GM12878 (cell line): ENCODE measurements at regions of chrX and their contacts with region 1.

Region 1: GRCh38 chrX:119729408-119730201 is 28.8 kb upstream of the SOWAHD start:
- DNase-seq: peak; percentile 31
- ATAC-seq: peak; percentile 77
- H3K4me3 ChIP-seq: no peak overlapping the region
- H3K27ac ChIP-seq: no peak overlapping the region
- H3K4me1 ChIP-seq: no peaks in the 10 kb centered on the region
- H3K27me3 ChIP-seq: no peaks in the 10 kb centered on the region
- CTCF ChIP-seq: peak; percentile 61 to 85 (median 76)
- EP300 ChIP-seq: no peak
- POLR2A ChIP-seq: no peak
- RAD21 ChIP-seq: peak; percentile 89

Region 2: DNA sequence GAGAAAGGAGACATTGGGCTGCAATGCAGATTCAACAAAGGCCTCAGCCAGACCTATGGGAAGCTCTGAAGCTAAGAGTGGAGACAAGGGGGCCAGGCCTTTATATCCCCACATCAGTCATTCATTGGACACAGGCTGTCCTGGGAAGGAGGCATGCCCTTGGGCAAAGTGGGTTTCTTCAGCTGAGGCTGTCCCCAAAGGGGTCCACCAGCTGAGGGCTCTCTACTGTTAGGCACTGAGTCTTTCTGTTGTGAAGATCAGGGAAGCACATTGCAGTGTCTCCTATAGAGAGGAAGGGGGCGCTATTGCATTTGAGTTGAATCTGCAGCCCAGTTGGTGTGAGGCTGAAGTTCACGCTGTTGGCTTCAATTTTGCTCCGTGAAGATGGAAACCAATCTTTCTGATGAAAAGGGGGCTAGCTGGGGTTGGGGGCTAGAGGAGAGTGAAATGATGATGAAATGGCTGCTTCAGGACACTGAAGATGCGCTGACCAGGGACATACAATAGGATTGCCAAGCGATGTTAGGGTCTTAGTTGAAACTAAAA is 213.4 kb before region 1 on chrX:
- CTCF ChIA-PET with region 1: interaction called, 89 read pairs
- POLR2A ChIA-PET with region 1: interaction called, 4 read pairs
- RAD21 ChIA-PET with region 1: interaction called, 23 read pairs
- SMC1A ChIA-PET with region 1: interaction called, 75 read pairs
- in situ Hi-C with region 1: loop called (anchors 5 kb)
- intact Hi-C with region 1: loop called (anchors 1 kb)
- DNase-seq: peak; percentile 39
- ATAC-seq: peak; percentile 95
- H3K4me3 ChIP-seq: no peak overlapping the region
- H3K27ac ChIP-seq: no peak overlapping the region
- H3K4me1 ChIP-seq: no peaks in the 10 kb centered on the region; the same call in 1 of the 2 replicates
- H3K27me3 ChIP-seq: no peaks in the 10 kb centered on the region
- CTCF ChIP-seq: peak; percentile 91 to 99 (median 93); a peak in 5 of 6 replicates
- EP300 ChIP-seq: no peak
- POLR2A ChIP-seq: no peak
- RAD21 ChIP-seq: peak; percentile 92

Region 3: GRCh38 chrX:119638725-119639471 is 90.7 kb before region 1 on chrX:
- CTCF ChIA-PET with region 1: interaction called, 28 read pairs
- POLR2A ChIA-PET with region 1: no interaction called
- RAD21 ChIA-PET with region 1: interaction called, 50 read pairs
- SMC1A ChIA-PET with region 1: interaction called, 34 read pairs
- in situ Hi-C with region 1: no loop called
- intact Hi-C with region 1: no loop called
- DNase-seq: peak; percentile 81
- ATAC-seq: peak; percentile 84
- H3K4me3 ChIP-seq: no peak overlapping the region
- H3K27ac ChIP-seq: peak overlapping the region; percentile 67
- H3K4me1 ChIP-seq: peaks cover 61% of the 10 kb centered on the region
- H3K27me3 ChIP-seq: no peaks in the 10 kb centered on the region
- CTCF ChIP-seq: 0 out of 6 replicates have a peak, but pooled peaks of 1 of the 3 experiments have one; percentile 10
- EP300 ChIP-seq: no peak
- POLR2A ChIP-seq: no peak
- RAD21 ChIP-seq: no peak

Region 4: GRCh38 chrX:119669424-119670037 is 60.1 kb before region 1 on chrX:
- CTCF ChIA-PET with region 1: interaction called, 13 read pairs
- POLR2A ChIA-PET with region 1: interaction called, 4 read pairs
- RAD21 ChIA-PET with region 1: interaction called, 13 read pairs
- SMC1A ChIA-PET with region 1: interaction called, 15 read pairs
- in situ Hi-C with region 1: no loop called
- intact Hi-C with region 1: no loop called
- DNase-seq: no peak
- ATAC-seq: no peak
- H3K4me3 ChIP-seq: no peak overlapping the region
- H3K27ac ChIP-seq: no peak overlapping the region
- H3K4me1 ChIP-seq: peaks cover 25% of the 10 kb centered on the region
- H3K27me3 ChIP-seq: no peaks in the 10 kb centered on the region
- CTCF ChIP-seq: no peak
- EP300 ChIP-seq: no peak
- POLR2A ChIP-seq: no peak
- RAD21 ChIP-seq: no peak

Region 5: GRCh38 chrX:119698845-119699244 is 30.8 kb before region 1 on chrX:
- CTCF ChIA-PET with region 1: interaction called, 33 read pairs
- POLR2A ChIA-PET with region 1: interaction called, 3 read pairs
- RAD21 ChIA-PET with region 1: interaction called, 50 read pairs
- SMC1A ChIA-PET with region 1: interaction called, 43 read pairs
- in situ Hi-C with region 1: no loop called
- intact Hi-C with region 1: loop called (anchors 2 kb)
- DNase-seq: no peak
- ATAC-seq: peak; percentile 69
- H3K4me3 ChIP-seq: no peak overlapping the region
- H3K27ac ChIP-seq: no peak overlapping the region
- H3K4me1 ChIP-seq: peaks cover 20% of the 10 kb centered on the region
- H3K27me3 ChIP-seq: no peaks in the 10 kb centered on the region
- CTCF ChIP-seq: peak; percentile 55 to 77 (median 72)
- EP300 ChIP-seq: no peak
- POLR2A ChIP-seq: no peak
- RAD21 ChIP-seq: peak; percentile 52

Region 6: DNA sequence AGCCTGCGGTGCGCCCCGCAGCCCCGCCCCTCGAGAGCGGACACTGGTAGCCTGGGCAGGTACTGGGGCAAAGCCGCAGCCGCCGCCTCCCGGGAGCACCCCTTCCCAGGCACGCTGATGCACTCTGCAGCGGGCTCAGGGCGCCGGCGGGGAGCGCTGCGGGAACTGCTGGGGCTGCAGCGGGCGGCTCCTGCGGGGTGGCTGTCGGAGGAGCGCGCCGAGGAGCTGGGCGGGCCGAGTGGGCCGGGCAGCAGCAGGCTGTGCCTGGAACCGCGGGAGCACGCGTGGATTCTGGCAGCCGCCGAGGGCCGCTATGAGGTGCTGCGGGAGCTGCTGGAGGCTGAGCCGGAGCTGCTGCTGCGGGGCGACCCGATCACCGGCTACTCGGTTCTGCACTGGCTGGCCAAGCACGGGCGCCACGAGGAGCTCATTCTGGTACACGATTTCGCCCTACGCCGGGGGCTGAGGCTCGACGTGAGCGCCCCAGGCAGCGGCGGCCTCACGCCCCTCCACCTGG is 29.2 kb after region 1 on chrX:
- CTCF ChIA-PET with region 1: interaction called, 78 read pairs
- POLR2A ChIA-PET with region 1: no interaction called
- RAD21 ChIA-PET with region 1: interaction called, 14 read pairs
- SMC1A ChIA-PET with region 1: interaction called, 42 read pairs
- in situ Hi-C with region 1: no loop called
- intact Hi-C with region 1: no loop called
- DNase-seq: no peak
- ATAC-seq: peak; percentile 9
- H3K4me3 ChIP-seq: peak overlapping the region; percentile 64
- H3K27ac ChIP-seq: no peak overlapping the region
- H3K4me1 ChIP-seq: peaks cover 44% of the 10 kb centered on the region
- H3K27me3 ChIP-seq: no peaks in the 10 kb centered on the region
- CTCF ChIP-seq: no peak
- EP300 ChIP-seq: no peak
- POLR2A ChIP-seq: no peak
- RAD21 ChIP-seq: no peak

Region 7: DNA sequence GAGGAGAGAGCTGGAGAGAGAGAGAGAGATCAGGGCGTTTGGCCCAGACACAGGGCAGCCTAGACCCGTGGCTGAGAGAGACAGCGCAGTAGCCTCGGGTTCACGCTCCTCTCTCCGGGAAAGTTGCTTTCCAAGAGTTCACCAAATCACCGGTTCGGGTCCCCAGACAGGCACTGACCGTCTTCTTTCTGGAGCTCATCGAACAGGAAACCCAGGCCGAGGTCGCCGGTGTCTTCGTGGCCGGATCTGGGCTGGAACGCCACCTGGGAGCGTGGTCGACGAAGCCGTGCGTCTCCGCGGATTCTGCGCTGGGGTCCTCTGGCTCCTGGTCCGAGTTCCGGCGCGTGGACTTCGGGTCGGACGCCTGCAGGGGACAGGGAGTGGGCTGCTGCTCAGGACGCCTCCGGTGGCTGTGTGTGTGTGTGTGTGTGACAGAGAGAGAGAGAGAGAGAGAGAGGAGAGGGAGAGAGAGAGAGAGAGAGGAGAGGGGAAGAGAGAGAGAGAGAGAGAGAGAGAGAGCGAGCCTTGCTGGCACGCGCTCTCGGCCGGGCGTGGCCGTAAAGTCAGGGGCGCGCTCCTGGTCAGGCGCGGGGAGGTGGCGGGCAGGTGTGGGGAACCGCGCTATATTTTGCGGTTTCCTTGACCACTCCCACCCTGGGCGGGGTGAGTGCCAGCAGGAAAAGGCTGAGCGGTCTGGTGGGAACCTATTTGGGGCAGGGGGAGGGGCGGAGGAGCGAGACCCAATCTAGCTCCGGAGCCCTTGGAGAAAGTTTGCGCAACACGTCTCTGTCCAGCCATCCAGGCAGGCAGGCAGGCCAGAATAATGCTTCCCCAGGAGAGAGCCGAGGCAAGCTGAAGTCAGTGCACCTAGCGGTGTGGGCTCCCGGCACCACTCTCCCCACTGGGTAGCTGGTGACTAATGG is 285.8 kb after region 1 on chrX:
- CTCF ChIA-PET with region 1: no interaction called
- POLR2A ChIA-PET with region 1: no interaction called
- RAD21 ChIA-PET with region 1: no interaction called
- SMC1A ChIA-PET with region 1: no interaction called
- in situ Hi-C with region 1: no loop called
- intact Hi-C with region 1: no loop called
- DNase-seq: no peak
- ATAC-seq: no peak; the same call in 1 of the 3 replicates
- H3K4me3 ChIP-seq: no peak overlapping the region
- H3K27ac ChIP-seq: no peak overlapping the region
- H3K4me1 ChIP-seq: no peaks in the 10 kb centered on the region
- H3K27me3 ChIP-seq: peaks cover 4 to 5% of the 10 kb centered on the region in 2 experiments; a peak in 3 of 4 replicates
- CTCF ChIP-seq: no peak
- EP300 ChIP-seq: no peak
- POLR2A ChIP-seq: no peak
- RAD21 ChIP-seq: no peak